ENCODE measurements at regions of chr14 and their contacts with region 1.

Region 1: GRCh38 chr14:67704484-67705089 is 2.9 kb downstream of the RDH12 start:
- DNase-seq: no peak
- H3K4me3 ChIP-seq: no peak overlapping the region
- H3K27ac ChIP-seq: no peak overlapping the region
- H3K4me1 ChIP-seq: no peaks in the 10 kb centered on the region
- H3K27me3 ChIP-seq: no peaks in the 10 kb centered on the region
- CTCF ChIP-seq: peak; percentile 71 to 74

Region 2: GRCh38 chr14:67583711-67584644 is 120.6 kb before region 1 on chr14:
- intact Hi-C with region 1: loop called (anchors 2 kb)
- DNase-seq: no peak
- H3K4me3 ChIP-seq: no peak overlapping the region
- H3K27ac ChIP-seq: no peak overlapping the region
- H3K4me1 ChIP-seq: no peaks in the 10 kb centered on the region
- H3K27me3 ChIP-seq: no peaks in the 10 kb centered on the region
- CTCF ChIP-seq: peak; percentile 51 to 58

Measured in tibial artery (tissue), 4 donors.